ENCODE measurements at regions of chr3 and their contacts with region 1.

Region 1: DNA sequence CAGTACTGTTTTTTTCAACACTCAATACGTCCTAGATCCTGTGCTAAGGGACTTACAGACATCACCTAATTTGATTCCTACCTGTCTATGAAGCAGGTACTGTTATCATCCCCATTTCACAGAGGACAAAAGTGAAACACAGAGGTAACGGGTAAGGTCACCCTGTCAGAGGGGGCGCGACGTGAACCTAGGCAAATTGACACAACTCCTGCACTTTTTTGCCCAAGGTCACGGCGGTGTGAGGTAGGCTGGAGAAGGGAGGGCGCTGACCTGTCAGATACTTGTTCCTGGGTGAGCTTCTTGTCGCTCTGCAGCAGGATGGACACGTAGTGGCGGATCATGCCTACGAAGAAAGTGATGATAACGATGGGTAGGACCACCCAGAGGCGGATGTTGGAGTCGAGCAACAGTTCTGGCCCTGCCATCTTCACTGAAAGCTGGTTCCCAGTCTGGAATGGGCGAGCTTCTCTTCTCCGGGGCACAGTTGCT is 360 bp downstream of the EMC3 start:
- DNase-seq: no peak
- H3K4me3 ChIP-seq: peak overlapping the region; percentile 79 to 99 (median 93)
- H3K4me3 Mint-ChIP-seq: peak overlapping the region; percentile 93 to 95
- H3K27ac ChIP-seq: peak overlapping the region; percentile 83 to 99
- H3K27ac Mint-ChIP-seq: peak overlapping the region; percentile 96 to 98 (median 97)
- H3K4me1 ChIP-seq: peaks cover 22 to 28% of the 10 kb centered on the region in 2 donors
- H3K4me1 Mint-ChIP-seq: peaks cover 23% of the 10 kb centered on the region
- H3K27me3 ChIP-seq: no peaks in the 10 kb centered on the region
- H3K27me3 Mint-ChIP-seq: no peaks in the 10 kb centered on the region
- CTCF ChIP-seq: no peak

Region 2: GRCh38 chr3:9396700-9397521 is 589.4 kb before region 1 on chr3:
- intact Hi-C with region 1: no loop called
- DNase-seq: peak; percentile 96 to 98 (median 96)
- H3K4me3 ChIP-seq: peak overlapping the region; percentile 49 to 86 (median 75)
- H3K4me3 Mint-ChIP-seq: peak overlapping the region; percentile 91 to 92
- H3K27ac ChIP-seq: peak overlapping the region; percentile 96 to 99
- H3K27ac Mint-ChIP-seq: peak overlapping the region; percentile 98 to 100 (median 99)
- H3K4me1 ChIP-seq: peaks cover 27 to 60% of the 10 kb centered on the region in 2 donors
- H3K4me1 Mint-ChIP-seq: peaks cover 59% of the 10 kb centered on the region
- H3K27me3 ChIP-seq: no peaks in the 10 kb centered on the region
- H3K27me3 Mint-ChIP-seq: peaks cover 0 to 1% (median 0%) of the 10 kb centered on the region in 3 donors
- CTCF ChIP-seq: no peak

Region 3: GRCh38 chr3:9932843-9933560 is 53.3 kb before region 1 on chr3:
- intact Hi-C with region 1: loop called in 1 of 2 experiments (anchors 5 kb)
- DNase-seq: peak; percentile 76 to 79 (median 78)
- H3K4me3 ChIP-seq: peak overlapping the region; percentile 41 to 85 (median 69)
- H3K4me3 Mint-ChIP-seq: peak overlapping the region; percentile 92 to 97
- H3K27ac ChIP-seq: peak overlapping the region; percentile 83 to 92
- H3K27ac Mint-ChIP-seq: peak overlapping the region; percentile 94 to 99 (median 97)
- H3K4me1 ChIP-seq: peaks cover 25 to 38% of the 10 kb centered on the region in 2 donors
- H3K4me1 Mint-ChIP-seq: peaks cover 30% of the 10 kb centered on the region
- H3K27me3 ChIP-seq: no peaks in the 10 kb centered on the region
- H3K27me3 Mint-ChIP-seq: peaks cover 0 to 2% (median 0%) of the 10 kb centered on the region in 3 donors
- CTCF ChIP-seq: peak; percentile 87

Region 4: GRCh38 chr3:10015461-10015904 is 29.2 kb after region 1 on chr3:
- intact Hi-C with region 1: no loop called
- DNase-seq: peak; percentile 39 to 77 (median 70)
- H3K4me3 ChIP-seq: peak overlapping the region in 2 of 3 experiments; percentile 10 to 57
- H3K4me3 Mint-ChIP-seq: peak overlapping the region; percentile 73 to 92
- H3K27ac ChIP-seq: peak overlapping the region; percentile 58 to 76
- H3K27ac Mint-ChIP-seq: peak overlapping the region; percentile 77 to 93 (median 88)
- H3K4me1 ChIP-seq: peaks cover 36% of the 10 kb centered on the region in 2 donors
- H3K4me1 Mint-ChIP-seq: peaks cover 52% of the 10 kb centered on the region
- H3K27me3 ChIP-seq: no peaks in the 10 kb centered on the region
- H3K27me3 Mint-ChIP-seq: no peaks in the 10 kb centered on the region
- CTCF ChIP-seq: no peak